ENCODE measurements at regions of chr2 and their contacts with region 1.

Region 1: GRCh38 chr2:144890828-144891227 is 370.9 kb upstream of the ZEB2 start:
- DNase-seq: peak in 1 of 2 experiments; percentile 8
- H3K4me3 ChIP-seq: no peak overlapping the region
- H3K27ac ChIP-seq: no peak overlapping the region
- H3K4me1 ChIP-seq: no peaks in the 10 kb centered on the region
- H3K27me3 ChIP-seq: no peaks in the 10 kb centered on the region
- CTCF ChIP-seq: 0 out of 2 replicates have a peak, but pooled peaks have one; percentile 32

Region 2: DNA sequence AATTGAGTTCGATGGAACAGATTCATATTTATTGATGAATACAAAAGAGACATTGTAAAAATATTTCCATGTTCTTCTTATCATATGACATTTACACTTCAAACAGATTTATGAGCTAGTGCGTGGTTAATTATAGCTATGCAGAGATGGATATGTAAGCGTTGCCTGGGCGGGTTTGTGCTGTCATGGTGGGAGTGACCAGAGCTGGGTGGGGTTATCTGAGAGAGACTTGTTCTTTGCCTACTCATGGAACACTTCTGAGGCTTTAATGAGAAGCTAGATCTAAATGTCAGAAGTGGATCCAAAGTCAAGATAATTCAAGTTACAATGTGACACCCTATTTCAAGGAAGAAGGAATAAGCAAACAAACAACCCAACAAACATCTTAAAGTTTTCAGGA is 208.6 kb before region 1 on chr2:
- CTCF ChIA-PET with region 1: no interaction called
- POLR2A ChIA-PET with region 1: no interaction called
- intact Hi-C with region 1: no loop called
- DNase-seq: no peak
- H3K4me3 ChIP-seq: no peak overlapping the region
- H3K27ac ChIP-seq: no peak overlapping the region
- H3K4me1 ChIP-seq: no peaks in the 10 kb centered on the region
- H3K27me3 ChIP-seq: no peaks in the 10 kb centered on the region
- CTCF ChIP-seq: no peak

Region 3: GRCh38 chr2:144693179-144693578 is 197.6 kb before region 1 on chr2:
- CTCF ChIA-PET with region 1: no interaction called
- POLR2A ChIA-PET with region 1: interaction called, 12 read pairs
- intact Hi-C with region 1: no loop called
- DNase-seq: no peak
- H3K4me3 ChIP-seq: no peak overlapping the region
- H3K27ac ChIP-seq: no peak overlapping the region
- H3K4me1 ChIP-seq: no peaks in the 10 kb centered on the region; the same call in 1 of the 2 replicates
- H3K27me3 ChIP-seq: no peaks in the 10 kb centered on the region
- CTCF ChIP-seq: no peak

Region 4: GRCh38 chr2:145199042-145199441 is 308.2 kb after region 1 on chr2:
- CTCF ChIA-PET with region 1: no interaction called
- POLR2A ChIA-PET with region 1: no interaction called
- intact Hi-C with region 1: no loop called
- DNase-seq: no peak
- H3K4me3 ChIP-seq: no peak overlapping the region
- H3K27ac ChIP-seq: no peak overlapping the region
- H3K4me1 ChIP-seq: no peaks in the 10 kb centered on the region
- H3K27me3 ChIP-seq: no peaks in the 10 kb centered on the region
- CTCF ChIP-seq: no peak

Region 5: GRCh38 chr2:145551686-145552085 is 660.9 kb after region 1 on chr2:
- CTCF ChIA-PET with region 1: no interaction called
- POLR2A ChIA-PET with region 1: no interaction called
- intact Hi-C with region 1: no loop called
- DNase-seq: no peak
- H3K4me3 ChIP-seq: no peak overlapping the region
- H3K27ac ChIP-seq: no peak overlapping the region
- H3K4me1 ChIP-seq: no peaks in the 10 kb centered on the region
- H3K27me3 ChIP-seq: no peaks in the 10 kb centered on the region
- CTCF ChIP-seq: no peak

Measured in PC-9 (cell line).